CD4-positive, alpha-beta T cell (primary cell): ENCODE measurements at regions of chr7 and their contacts with region 1.

Region 1: DNA sequence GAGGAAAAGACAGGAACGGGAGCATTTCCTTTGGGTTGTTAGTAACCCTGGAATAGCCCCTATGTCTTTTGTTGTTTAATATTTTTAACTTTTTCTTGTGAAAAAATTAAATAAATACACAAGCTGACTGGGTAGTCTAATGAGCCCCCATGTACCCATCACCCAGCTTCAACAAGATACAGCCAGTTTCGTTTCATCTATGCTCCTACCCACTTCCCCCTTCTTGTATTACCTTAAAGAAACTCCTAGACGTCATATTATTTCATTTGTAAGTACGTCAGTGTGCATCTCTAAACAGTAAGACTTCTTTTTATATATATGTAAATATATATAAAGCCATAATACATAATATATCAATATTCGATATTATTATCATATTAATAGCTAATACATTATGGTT is 42.8 kb upstream of the NUB1 start:
- DNase-seq: no peak
- ATAC-seq: no peak
- H3K4me3 ChIP-seq: no peak overlapping the region
- H3K4me3 Mint-ChIP-seq: no peak overlapping the region
- H3K27ac ChIP-seq: no peak overlapping the region
- H3K27ac Mint-ChIP-seq: no peak overlapping the region
- H3K4me1 ChIP-seq: peaks cover 8% of the 10 kb centered on the region
- H3K4me1 Mint-ChIP-seq: no peaks in the 10 kb centered on the region
- H3K27me3 ChIP-seq: peaks cover 13 to 16% of the 10 kb centered on the region in 2 experiments
- H3K27me3 Mint-ChIP-seq: peaks cover 33% of the 10 kb centered on the region
- CTCF ChIP-seq: no peak

Region 2: GRCh38 chr7:151232091-151232916 is 66.5 kb before region 1 on chr7 and contains the start of gene CHPF2:
- CTCF ChIA-PET with region 1: no interaction called
- POLR2A ChIA-PET with region 1: no interaction called
- intact Hi-C with region 1: no loop called
- DNase-seq: peak; percentile 73 to 93 (median 87)
- ATAC-seq: peak; percentile 82
- H3K4me3 ChIP-seq: peak within 1 kb of the TSS; percentile 95
- H3K4me3 Mint-ChIP-seq: peak within 1 kb of the TSS; percentile 99
- H3K27ac ChIP-seq: peak within 1 kb of the TSS; percentile 61 to 74
- H3K27ac Mint-ChIP-seq: peak within 1 kb of the TSS; percentile 90
- H3K4me1 ChIP-seq: peaks cover 48% of the 10 kb centered on the region
- H3K4me1 Mint-ChIP-seq: peaks cover 45% of the 10 kb centered on the region
- H3K27me3 ChIP-seq: no peaks in the 10 kb centered on the region
- H3K27me3 Mint-ChIP-seq: no peaks in the 10 kb centered on the region
- CTCF ChIP-seq: no peak
- total RNA-seq, gene CHPF2: 29.6 to 30.5 TPM

Region 3: GRCh38 chr7:151503902-151504714 is 205.3 kb after region 1 on chr7:
- CTCF ChIA-PET with region 1: no interaction called
- POLR2A ChIA-PET with region 1: no interaction called
- intact Hi-C with region 1: loop called in 1 of 2 experiments (anchors 1 kb)
- DNase-seq: peak in 2 of 14 experiments; percentile 27 to 34
- ATAC-seq: no peak
- H3K4me3 ChIP-seq: no peak overlapping the region
- H3K4me3 Mint-ChIP-seq: no peak overlapping the region
- H3K27ac ChIP-seq: no peak overlapping the region
- H3K27ac Mint-ChIP-seq: no peak overlapping the region
- H3K4me1 ChIP-seq: peaks cover 30% of the 10 kb centered on the region
- H3K4me1 Mint-ChIP-seq: peaks cover 83% of the 10 kb centered on the region
- H3K27me3 ChIP-seq: no peaks in the 10 kb centered on the region
- H3K27me3 Mint-ChIP-seq: no peaks in the 10 kb centered on the region
- CTCF ChIP-seq: no peak